Posterior cingulate gyrus (tissue), 11 donors: ENCODE measurements at regions of chr13 and their contacts with region 1.

Region 1: GRCh38 chr13:40271931-40272775 is 394.3 kb downstream of the FOXO1 start:
- DNase-seq: peak in 9 of 10 donors; percentile 23 to 90 (median 51)

Region 2: GRCh38 chr13:40190641-40191100 is 81.5 kb before region 1 on chr13:
- intact Hi-C with region 1: loop called (anchors 5 kb)
- DNase-seq: peak; percentile 42 to 95 (median 68)